ENCODE measurements at regions of chr9 and their contacts with region 1.

Region 1: DNA sequence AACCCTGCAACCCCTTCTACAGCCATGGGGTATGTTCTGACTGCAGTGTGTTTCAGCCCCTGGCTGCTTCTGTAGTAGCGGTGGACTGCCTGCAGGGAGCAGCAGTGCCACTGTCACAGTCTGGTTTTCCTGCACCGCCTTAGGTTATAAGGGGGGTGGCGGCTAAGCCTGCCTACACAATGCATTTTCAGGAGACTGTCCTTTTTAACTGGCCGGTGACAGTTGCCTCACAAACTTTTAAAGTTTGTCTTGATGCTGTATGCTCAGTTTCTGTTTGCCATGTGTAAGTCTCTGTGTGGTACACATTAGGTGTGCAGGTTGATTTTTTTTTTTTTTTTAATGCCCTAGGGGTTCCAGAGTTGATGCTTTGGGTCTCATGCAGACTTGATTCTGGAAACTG is 53.0 kb downstream of the NUP214 start:
- DNase-seq: peak; percentile 81
- ATAC-seq: peak; percentile 95

Region 2: DNA sequence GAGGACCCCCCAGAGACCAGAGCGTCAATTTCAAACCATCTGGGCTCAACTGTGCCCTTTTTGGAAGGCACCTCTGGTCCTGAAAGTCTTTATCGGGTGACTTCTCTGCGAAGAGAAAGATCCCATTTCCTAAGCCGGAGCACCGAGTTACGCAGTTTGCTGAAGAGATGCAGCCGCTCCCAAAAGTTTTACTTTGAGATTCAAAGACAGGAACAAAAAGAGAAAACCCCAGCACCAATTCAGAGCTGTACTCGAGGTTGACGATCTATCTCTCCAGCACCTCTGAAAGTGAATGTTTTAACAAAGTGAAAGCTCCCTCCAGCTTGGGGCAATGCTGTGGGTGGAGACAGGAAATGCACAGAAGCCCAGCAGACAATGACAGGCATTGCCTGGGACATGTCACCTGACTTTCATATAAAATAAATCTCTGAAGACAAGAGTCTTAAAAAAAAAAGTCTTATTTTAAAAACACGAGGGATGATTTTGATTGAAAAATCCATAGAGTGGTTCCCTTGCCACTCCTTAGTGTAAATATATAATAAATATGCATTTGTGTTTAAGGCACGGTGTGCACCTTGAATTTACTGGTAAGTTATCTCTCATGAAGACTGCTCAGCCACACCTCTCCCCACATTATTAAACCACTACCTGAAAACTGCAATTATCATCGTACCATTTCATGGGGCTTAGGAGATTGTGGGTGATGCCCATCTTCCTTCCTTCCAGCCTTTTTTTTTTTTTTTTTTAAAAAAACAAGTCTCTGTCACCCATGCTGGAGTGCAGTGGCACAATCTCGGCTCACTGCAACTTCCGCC is 1215.3 kb before region 1 on chr9:
- intact Hi-C with region 1: no loop called
- DNase-seq: no peak
- ATAC-seq: peak; percentile 70

Region 3: DNA sequence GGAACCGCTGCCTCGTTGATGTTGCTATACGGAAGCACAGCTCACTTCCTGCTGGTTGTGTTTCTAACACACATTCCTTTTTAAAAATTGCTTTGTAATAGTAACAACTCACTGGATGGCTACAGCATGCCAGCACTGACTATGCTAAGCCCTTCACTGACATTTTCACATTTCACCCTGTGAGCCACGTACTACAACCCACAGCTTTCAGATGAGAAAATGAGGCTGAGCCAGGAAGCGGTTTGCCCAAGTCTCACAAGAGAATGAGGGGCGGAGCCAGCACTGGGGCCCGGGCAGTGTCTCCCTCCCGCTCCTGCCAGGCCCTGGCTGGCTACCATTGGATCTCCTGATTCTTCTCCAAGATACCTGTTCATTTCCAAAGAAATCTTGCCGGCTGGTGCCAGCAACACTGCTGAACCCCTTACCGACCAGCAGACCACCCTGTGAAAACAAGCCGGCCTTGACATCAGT is 59.6 kb after region 1 on chr9:
- intact Hi-C with region 1: loop called (anchors 5 kb)
- DNase-seq: peak; percentile 91
- ATAC-seq: peak; percentile 53

Region 4: GRCh38 chr9:131277910-131278701 is 99.7 kb after region 1 on chr9:
- intact Hi-C with region 1: loop called (anchors 2 kb)
- DNase-seq: peak; percentile 90
- ATAC-seq: peak; percentile 66